Lower leg skin (tissue), 4 donors: ENCODE measurements at regions of chr22 and their contacts with region 1.

Region 1: DNA sequence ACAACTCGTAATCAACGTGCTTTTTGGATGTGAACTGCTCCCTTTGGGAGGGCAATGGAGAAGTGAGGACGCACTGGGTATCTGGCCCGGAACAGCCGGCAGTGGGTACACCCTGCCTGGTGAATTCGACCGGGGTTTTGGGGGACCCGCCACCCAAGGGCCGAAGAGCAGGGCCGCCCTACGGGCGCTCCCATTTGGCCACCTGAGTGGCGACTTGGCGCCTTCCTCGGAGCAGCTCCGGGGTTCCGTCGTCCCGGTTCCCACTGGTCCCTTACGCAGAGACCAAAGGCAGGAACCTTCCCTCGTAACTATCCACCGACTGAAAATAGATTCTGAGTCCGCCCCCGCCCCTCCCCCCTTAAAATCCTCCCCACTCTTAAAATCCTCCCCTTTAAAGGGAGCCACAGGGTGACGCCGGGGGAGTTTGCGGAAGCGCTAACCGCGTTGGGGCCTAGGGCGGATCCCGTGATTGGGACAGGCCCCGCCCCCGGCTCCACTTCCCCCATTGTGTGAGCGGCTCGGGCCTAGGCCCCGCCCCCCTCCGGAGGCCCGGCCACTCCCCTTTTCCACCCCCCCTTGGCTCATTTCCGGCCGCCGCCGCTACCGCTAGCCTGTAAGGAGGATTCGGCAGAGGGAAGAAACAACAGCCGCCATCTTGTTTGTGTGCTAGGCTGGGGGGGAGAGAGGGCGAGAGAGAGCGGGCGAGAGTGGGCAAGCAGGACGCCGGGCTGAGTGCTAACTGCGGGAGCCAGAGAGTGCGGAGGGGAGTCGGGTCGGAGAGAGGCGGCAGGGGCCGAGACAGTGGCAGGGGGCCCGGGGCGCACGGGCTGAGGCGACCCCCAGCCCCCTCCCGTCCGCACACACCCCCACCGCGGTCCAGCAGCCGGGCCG is 1.0 kb upstream of the EP300 start:
- DNase-seq: peak; percentile 98 to 100
- H3K4me3 ChIP-seq: peak overlapping the region; percentile 68
- CTCF ChIP-seq: no peak
- POLR2A ChIP-seq: peak in 1 of 2 donors; percentile 64

Region 2: GRCh38 chr22:40950962-40951794 is 140.2 kb before region 1 on chr22 and contains the start of gene RBX1:
- intact Hi-C with region 1: loop called (anchors 5 kb)
- DNase-seq: peak; percentile 98 to 100
- H3K4me3 ChIP-seq: peak within 1 kb of the TSS; percentile 72
- CTCF ChIP-seq: no peak
- POLR2A ChIP-seq: peak in 1 of 2 donors; percentile 56
- total RNA-seq, gene RBX1: 26.5 to 47.7 (median 42.0) TPM